Calu3 (cell line): ENCODE measurements at regions of chr5 and their contacts with region 1.

Region 1: DNA sequence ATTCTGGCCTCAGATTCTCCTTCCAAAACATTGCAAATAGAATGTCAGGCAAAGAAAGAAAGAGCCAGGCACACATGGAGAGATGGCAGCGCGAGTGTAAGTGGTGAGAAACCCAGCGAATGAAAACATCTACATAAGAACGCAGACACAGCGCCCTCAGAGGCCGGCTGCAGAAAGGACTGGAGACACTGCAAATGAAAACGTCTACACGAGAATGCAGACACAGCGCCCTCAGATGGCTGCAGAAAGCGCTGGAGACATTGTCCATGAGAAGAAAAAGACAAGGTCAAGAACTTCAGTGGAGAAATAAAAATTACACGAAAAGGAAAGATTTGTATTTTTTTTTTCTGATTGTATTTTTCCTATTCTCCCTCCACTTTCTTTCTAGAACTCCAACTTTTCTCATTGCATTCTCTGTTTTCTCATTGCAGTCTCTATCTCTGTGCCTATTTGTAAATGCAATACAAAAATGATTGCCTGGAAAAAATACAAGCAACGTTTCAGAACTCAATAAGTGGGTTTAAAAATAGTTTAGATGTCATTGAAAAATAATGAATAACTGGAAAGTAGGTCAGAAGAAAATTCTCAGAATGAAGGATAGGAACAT is 117.9 kb upstream of the LPCAT1 start:
- DNase-seq: peak; percentile 72
- H3K4me3 Mint-ChIP-seq: no peak overlapping the region
- H3K27ac Mint-ChIP-seq: no peak overlapping the region
- H3K4me1 Mint-ChIP-seq: no peaks in the 10 kb centered on the region
- H3K27me3 Mint-ChIP-seq: peaks cover 39% of the 10 kb centered on the region
- CTCF ChIP-seq: peak; percentile 76

Region 2: DNA sequence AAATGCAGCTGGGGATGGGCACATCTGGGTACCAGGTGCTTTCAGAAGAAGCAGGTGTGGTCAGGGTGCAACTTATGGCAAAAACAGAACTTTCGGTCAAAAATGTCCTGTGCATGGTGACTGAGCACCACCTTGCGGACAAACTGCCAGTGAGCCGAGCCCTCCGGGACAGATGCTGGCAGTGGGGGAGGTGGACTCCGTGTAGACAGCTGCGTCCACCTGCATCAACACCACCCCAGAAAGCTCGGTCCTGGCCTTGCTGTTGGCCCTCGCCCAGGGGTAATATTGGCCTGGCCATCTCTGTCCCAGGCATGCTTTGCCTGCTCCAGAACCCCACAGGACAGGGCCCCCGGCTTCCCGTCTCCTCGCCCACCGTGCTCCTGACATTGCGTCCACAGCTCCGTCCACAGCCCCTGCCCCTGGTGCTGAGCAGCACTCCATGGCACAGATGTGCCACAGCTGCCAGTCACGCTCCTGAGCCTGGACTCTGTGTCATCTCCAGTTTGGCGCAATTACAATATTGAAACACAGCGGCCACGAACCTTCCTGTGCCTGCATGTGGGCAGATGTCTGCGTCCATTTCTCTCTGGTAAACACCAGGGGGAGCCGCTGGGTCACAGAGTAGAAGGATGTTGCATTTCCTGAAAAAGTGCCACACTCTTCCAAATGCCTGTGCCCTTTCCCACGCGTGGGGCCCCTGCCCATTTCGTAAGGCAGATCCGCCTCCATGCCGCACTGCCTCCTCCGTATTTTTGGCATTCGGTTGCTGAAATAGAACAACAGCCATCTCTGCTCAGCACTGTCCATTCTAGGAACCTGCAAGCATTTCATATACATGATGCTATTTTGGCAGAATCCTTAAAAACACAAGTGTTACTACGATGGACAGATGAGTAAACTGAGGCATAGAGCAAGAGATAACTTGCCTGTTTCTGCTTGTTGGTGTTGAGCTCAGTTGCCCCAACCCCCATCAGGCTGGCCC is 473.6 kb before region 1 on chr5:
- CTCF ChIA-PET with region 1: interaction called, 4 read pairs
- intact Hi-C with region 1: loop called (anchors 2 kb)
- DNase-seq: peak; percentile 84
- H3K4me3 Mint-ChIP-seq: peak overlapping the region; percentile 70
- H3K27ac Mint-ChIP-seq: peak overlapping the region; percentile 20
- H3K4me1 Mint-ChIP-seq: peaks cover 21% of the 10 kb centered on the region
- H3K27me3 Mint-ChIP-seq: peaks cover 48% of the 10 kb centered on the region
- CTCF ChIP-seq: peak; percentile 84

Region 3: DNA sequence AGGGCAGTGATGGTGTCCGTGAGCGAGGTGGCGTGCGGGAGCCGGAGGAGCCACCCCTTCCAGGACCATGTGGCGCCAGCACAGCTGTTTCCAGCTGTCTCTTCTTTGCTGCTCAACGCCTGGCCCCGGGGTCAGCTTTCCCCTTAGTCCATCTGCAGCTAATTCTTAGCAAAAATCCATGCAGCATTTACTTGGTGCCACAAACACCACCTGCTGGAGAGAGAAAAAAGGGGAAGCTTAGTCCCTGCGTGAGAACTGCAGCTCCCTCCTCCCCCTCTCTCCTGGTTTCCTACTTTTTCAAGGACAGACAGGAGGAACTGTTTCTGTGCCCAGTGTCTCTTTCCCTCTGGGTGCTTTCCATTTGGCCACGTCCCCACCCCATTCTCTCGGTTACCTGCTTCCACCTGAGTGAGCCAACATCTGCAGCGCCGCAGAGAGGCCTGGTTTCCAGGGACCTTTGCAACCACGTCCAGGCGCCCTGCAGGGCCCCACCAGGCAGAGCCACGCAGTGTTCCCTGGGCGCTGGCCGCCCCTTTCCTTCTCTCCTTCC is 436.9 kb before region 1 on chr5:
- CTCF ChIA-PET with region 1: interaction called, 12 read pairs
- intact Hi-C with region 1: loop called (anchors 2 kb)
- DNase-seq: peak; percentile 25
- H3K4me3 Mint-ChIP-seq: no peak overlapping the region
- H3K27ac Mint-ChIP-seq: no peak overlapping the region
- H3K4me1 Mint-ChIP-seq: no peaks in the 10 kb centered on the region
- H3K27me3 Mint-ChIP-seq: peaks cover 51% of the 10 kb centered on the region
- CTCF ChIP-seq: peak; percentile 33

Region 4: DNA sequence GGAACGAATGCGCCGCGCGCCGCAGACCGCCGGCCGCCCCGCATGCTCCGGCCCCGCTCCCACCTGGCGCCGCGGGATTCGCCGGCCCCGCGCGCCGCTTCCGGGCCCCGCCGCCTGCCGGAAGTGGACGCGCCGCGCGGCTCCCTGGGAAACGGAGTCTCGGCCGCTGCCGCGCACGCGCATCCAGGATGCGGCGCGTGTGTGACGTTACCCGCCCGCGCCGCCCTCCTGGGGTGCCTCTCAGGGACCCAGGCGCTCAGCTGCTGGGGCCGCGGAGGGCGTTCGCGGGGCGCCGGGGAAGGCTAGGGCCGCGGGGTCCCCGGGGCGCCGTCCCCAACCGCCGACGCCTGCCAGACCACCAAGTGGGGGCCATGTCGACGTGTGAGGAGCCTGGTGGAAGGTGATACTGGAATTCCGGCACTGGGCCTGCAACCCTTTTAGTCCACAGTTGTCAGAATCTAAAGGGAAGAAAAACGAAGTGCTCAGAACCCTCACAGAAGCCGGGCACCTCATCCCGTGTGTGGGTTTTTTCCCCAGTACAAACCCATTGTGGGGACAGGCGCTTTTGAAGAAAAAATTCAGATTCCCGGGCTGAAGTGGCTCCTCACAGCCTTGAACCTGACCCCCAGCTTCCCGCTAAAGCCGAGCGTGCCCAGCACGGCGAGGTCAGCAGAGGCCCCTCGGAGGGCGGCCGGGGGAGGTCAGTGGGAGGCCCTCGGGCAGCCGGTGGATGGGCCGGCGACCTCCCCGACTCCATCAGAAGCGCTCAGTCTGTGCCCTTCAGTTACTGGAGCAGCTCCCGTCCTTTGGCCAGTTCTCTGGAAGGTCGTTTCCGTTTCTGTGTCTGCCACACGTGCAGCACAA is 296.5 kb before region 1 on chr5 and contains the start of gene CLPTM1L:
- CTCF ChIA-PET with region 1: interaction called, 3 read pairs
- intact Hi-C with region 1: loop called (anchors 10 kb)
- DNase-seq: peak; percentile 90
- H3K4me3 Mint-ChIP-seq: peak within 1 kb of the TSS; percentile 79
- H3K27ac Mint-ChIP-seq: peak within 1 kb of the TSS; percentile 66
- H3K4me1 Mint-ChIP-seq: peaks cover 16% of the 10 kb centered on the region
- H3K27me3 Mint-ChIP-seq: peaks cover 18% of the 10 kb centered on the region
- CTCF ChIP-seq: no peak
- total RNA-seq, gene CLPTM1L: 120 and 127 TPM in 2 replicates

Region 5: GRCh38 chr5:1462358-1462757 is 179.3 kb before region 1 on chr5:
- CTCF ChIA-PET with region 1: no interaction called
- intact Hi-C with region 1: no loop called
- DNase-seq: no peak
- H3K4me3 Mint-ChIP-seq: no peak overlapping the region
- H3K27ac Mint-ChIP-seq: no peak overlapping the region
- H3K4me1 Mint-ChIP-seq: no peaks in the 10 kb centered on the region
- H3K27me3 Mint-ChIP-seq: no peaks in the 10 kb centered on the region
- CTCF ChIP-seq: no peak